ENCODE measurements at regions of chr4 and their contacts with region 1.

Region 1: DNA sequence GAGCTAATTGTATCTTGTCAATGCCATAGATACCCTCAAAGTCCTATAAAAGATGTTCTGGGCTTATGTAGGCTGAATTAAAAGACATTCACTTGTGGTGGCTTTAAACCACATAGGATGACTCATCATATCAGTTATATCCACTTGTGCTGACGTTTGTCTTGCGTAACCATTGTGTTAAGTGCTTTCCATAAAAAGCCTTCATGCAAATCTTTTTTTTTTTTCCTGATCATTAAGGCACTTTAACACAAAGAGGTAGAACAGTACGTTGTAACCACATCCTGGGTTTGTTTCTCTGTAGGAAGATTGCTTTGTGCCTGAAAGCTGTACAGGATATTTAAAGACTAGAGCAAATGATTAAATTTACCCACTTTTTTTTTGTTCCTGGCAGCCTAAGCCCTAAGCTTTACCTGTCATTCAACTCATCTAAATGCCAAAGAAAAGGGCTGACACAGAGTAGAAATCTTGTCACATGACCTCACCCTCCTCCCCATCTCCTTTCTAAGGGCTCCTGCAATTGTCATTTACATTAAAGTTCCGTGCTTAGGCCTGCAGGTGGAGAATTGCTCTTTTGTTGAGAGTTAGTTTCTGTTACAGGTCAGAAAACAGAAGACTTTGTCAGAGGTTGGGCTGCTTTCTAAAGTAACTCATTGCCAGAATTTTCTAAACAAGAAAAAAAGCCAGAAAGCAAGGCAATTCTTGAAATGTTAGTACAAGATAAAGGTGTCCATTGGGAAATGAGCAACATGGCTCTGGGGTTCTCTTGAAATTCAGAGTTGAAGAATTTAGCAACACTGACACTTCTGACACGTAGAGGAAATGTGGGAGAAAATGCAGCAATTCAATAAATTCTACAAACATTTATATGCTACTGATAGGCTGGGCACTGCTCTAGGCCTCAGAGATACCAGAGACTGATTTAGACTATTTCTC is 555.6 kb downstream of the PPARGC1A start:
- DNase-seq: peak; percentile 67 to 84 (median 81)
- H3K4me3 ChIP-seq: no peak overlapping the region
- H3K4me3 Mint-ChIP-seq: peak overlapping the region; percentile 1 to 71 (median 41)
- H3K27ac ChIP-seq: peak overlapping the region; percentile 30
- H3K27ac Mint-ChIP-seq: peak overlapping the region; percentile 48 to 94 (median 83)
- H3K4me1 ChIP-seq: peaks cover 28% of the 10 kb centered on the region
- H3K4me1 Mint-ChIP-seq: peaks cover 14 to 27% (median 18%) of the 10 kb centered on the region in 4 donors
- H3K27me3 ChIP-seq: no peaks in the 10 kb centered on the region
- H3K27me3 Mint-ChIP-seq: no peaks in the 10 kb centered on the region

Region 2: GRCh38 chr4:23290656-23291055 is 43.6 kb before region 1 on chr4:
- CTCF ChIA-PET with region 1: no interaction called
- POLR2A ChIA-PET with region 1: interaction called, 3 read pairs
- intact Hi-C with region 1: loop called (anchors 1 kb)
- DNase-seq: no peak
- H3K4me3 ChIP-seq: no peak overlapping the region
- H3K4me3 Mint-ChIP-seq: peak overlapping the region in 1 of 8 donors; percentile 12
- H3K27ac ChIP-seq: no peak overlapping the region
- H3K27ac Mint-ChIP-seq: no peak overlapping the region
- H3K4me1 ChIP-seq: peaks cover 8% of the 10 kb centered on the region
- H3K4me1 Mint-ChIP-seq: peaks cover 4 to 12% (median 5%) of the 10 kb centered on the region in 4 donors
- H3K27me3 ChIP-seq: no peaks in the 10 kb centered on the region
- H3K27me3 Mint-ChIP-seq: no peaks in the 10 kb centered on the region

Region 3: GRCh38 chr4:23717528-23718248 is 383.5 kb after region 1 on chr4:
- CTCF ChIA-PET with region 1: no interaction called
- POLR2A ChIA-PET with region 1: no interaction called
- intact Hi-C with region 1: loop called (anchors 10 kb)
- DNase-seq: peak in 1 of 5 donors; percentile 0
- H3K4me3 ChIP-seq: no peak overlapping the region
- H3K4me3 Mint-ChIP-seq: no peak overlapping the region
- H3K27ac ChIP-seq: no peak overlapping the region
- H3K27ac Mint-ChIP-seq: no peak overlapping the region
- H3K4me1 ChIP-seq: no peaks in the 10 kb centered on the region
- H3K4me1 Mint-ChIP-seq: no peaks in the 10 kb centered on the region
- H3K27me3 ChIP-seq: no peaks in the 10 kb centered on the region
- H3K27me3 Mint-ChIP-seq: no peaks in the 10 kb centered on the region

Measured in CD4-positive, alpha-beta memory T cell (primary cell).